Posterior vena cava (tissue), 2 donors: ENCODE measurements at regions of chrX and their contacts with region 1.

Region 1: GRCh38 chrX:142854970-142855369 is 170.8 kb upstream of the SPANXN4 start:
- DNase-seq: no peak

Region 2: GRCh38 chrX:142831961-142832530 is 22.9 kb before region 1 on chrX:
- intact Hi-C with region 1: loop called in 1 of 2 experiments (anchors 1 kb)
- DNase-seq: no peak

Region 3: DNA sequence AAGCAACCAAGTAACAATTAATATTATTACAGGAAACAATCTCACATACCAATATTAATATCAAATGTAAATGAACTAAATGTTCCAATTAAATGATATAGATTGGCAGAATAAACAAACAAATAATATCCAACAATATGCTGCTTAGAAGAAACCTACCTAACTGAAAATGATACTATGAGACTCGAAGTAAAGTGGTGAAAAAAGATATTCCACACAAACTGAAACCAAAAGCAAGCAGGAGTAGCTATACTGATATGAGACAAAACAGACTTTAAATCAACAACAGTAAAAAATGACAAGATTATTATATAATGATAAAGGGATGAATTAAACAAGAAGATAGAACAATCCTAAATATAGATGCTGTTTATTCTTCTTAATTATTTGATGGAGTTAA is 310.8 kb after region 1 on chrX:
- intact Hi-C with region 1: no loop called
- DNase-seq: no peak

Region 4: DNA sequence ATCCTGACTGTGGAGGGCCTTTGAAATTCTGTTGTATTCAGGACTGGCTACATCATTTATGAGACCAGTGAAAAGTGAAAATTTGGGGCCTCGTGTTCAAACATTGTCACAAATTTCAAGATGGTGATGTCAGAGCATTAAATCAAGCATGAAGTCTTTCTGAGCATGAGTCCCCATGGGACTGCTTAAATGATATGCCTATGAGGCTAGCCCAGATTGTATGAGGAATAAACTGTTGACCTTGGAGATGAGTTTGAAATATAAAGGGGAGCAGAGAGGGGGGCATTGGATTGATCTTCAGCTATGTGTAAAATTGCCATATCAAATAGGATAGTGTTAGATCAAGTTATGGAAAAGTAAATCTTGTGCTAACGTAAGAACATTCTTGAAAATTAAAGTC is 432.3 kb after region 1 on chrX:
- intact Hi-C with region 1: no loop called
- DNase-seq: no peak